ENCODE measurements at regions of chr5 and their contacts with region 1.

Region 1: GRCh38 chr5:43313035-43313853 is at the start of gene HMGCS1:
- DNase-seq: peak; percentile 99 to 100
- H3K4me3 ChIP-seq: peak within 1 kb of the TSS; percentile 85 to 94
- H3K27ac ChIP-seq: peak within 1 kb of the TSS; percentile 92 to 93
- H3K4me1 ChIP-seq: peaks cover 0 to 8% of the 10 kb centered on the region in 2 donors
- H3K27me3 ChIP-seq: no peaks in the 10 kb centered on the region
- CTCF ChIP-seq: no peak
- total RNA-seq, gene HMGCS1: 36.5 TPM

Region 2: DNA sequence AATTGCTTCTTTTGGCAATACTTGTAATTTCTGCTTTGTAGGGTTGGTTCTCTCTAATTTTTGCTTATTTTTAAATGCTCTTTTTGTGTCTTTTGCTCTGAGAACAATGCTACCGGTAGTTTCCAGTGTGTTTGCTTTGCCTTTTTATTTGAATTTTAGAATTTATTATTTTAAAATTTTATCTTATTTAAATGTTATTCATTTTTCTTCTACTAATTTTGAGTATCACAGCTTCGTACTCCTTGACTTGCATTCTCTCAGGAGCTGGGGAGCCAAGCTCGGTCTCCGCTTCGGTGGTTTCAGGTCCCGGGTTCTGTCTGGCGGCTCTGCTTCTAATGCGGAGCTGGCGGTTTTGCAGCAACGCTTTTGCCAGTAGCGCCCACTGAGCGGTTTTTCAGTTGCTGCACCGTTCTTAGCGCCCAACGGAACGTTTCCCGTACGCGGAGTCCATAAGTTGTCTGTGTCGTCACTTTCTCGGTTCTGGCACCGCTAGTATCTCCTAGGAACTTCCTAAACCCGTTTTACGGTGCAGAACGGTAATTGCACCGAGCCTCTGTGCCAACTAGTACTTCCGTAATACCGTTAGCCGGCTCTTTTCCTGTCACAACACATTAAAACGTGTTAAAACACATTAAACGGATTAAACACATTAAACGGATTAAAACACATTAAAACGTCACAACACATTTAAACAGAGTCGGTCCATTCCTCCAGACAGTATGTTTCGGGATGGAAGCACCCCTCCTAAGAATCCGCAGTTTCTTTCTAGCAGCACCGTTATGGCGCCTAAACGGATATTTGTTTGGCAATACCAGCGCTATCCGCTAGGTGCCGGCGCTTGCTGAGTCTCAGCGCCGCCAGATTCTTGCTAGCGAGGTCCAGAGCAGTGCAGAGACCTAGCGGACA is 318.7 kb before region 1 on chr5:
- intact Hi-C with region 1: loop called (anchors 1 kb)
- DNase-seq: peak in 1 of 2 donors; percentile 94
- H3K4me3 ChIP-seq: peak overlapping the region; percentile 52 to 72
- H3K27ac ChIP-seq: peak overlapping the region; percentile 90 to 97
- H3K4me1 ChIP-seq: peaks cover 0 to 4% of the 10 kb centered on the region in 2 donors
- H3K27me3 ChIP-seq: no peaks in the 10 kb centered on the region
- CTCF ChIP-seq: peak; percentile 84 to 88 (median 85)

Region 3: GRCh38 chr5:43191740-43192557 is 121.3 kb before region 1 on chr5 and contains the start of gene NIM1K:
- intact Hi-C with region 1: loop called (anchors 2 kb)
- DNase-seq: peak; percentile 11 to 77
- H3K4me3 ChIP-seq: peak within 1 kb of the TSS; percentile 49 to 87
- H3K27ac ChIP-seq: no peak within 1 kb of the TSS
- H3K4me1 ChIP-seq: peaks cover 0 to 5% of the 10 kb centered on the region in 2 donors
- H3K27me3 ChIP-seq: no peaks in the 10 kb centered on the region
- CTCF ChIP-seq: no peak
- total RNA-seq, gene NIM1K: not detected

Region 4: GRCh38 chr5:43484106-43484849 is 171.0 kb after region 1 on chr5:
- intact Hi-C with region 1: loop called (anchors 1 kb)
- DNase-seq: peak; percentile 14 to 85
- H3K4me3 ChIP-seq: peak overlapping the region; percentile 69 to 97
- H3K27ac ChIP-seq: peak overlapping the region; percentile 98 to 99
- H3K4me1 ChIP-seq: peaks cover 0 to 7% of the 10 kb centered on the region in 2 donors
- H3K27me3 ChIP-seq: no peaks in the 10 kb centered on the region
- CTCF ChIP-seq: peak; percentile 54 to 79 (median 67)

Region 5: DNA sequence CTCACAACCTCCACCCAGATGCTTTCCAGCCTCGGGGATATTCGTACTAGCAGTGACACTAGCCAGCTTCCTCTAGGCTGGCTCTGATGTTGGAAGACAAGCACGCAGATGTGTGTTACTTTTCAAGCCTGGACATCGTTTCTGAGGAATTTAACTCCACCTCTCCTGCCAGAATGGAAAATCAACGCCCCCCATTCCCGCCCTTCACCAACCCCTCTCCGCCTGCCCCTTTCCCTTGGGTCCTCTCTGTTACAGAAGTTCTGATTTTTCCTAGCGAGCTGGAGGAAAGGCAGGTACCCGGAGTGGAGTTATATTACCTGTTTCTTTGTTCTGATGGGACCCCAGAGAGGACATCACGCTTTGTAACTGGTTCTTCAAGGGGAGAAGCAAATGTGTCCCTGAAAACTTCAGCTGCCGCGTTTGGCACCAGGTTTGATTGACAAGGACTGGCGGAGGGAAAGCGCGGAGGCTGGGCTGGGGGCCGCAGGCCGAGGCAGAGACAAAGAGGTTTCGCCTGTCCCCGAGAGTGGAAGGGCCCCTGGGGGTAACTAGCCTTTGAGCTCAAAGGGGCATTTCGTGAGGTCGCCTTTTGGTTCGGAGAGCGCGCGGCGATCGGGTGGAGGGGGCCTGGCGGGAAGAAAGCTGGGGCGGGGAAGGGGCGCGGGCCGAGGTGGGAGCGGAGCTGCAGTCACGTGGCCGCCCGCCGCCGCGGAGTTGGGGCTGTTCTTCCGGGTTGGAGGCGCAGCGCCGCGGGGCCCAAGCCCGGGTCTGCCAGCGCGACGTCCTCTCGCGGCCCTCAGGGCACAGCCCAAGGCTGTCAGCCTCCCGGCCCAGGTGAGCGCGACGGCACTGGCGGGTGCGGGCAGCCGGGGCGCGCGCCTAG is 289.5 kb after region 1 on chr5 and contains the start of gene NNT:
- intact Hi-C with region 1: loop called (anchors 2 kb)
- DNase-seq: peak; percentile 12 to 87
- H3K4me3 ChIP-seq: peak within 1 kb of the TSS; percentile 82 to 97
- H3K27ac ChIP-seq: peak within 1 kb of the TSS; percentile 86 to 95
- H3K4me1 ChIP-seq: peaks cover 2 to 9% of the 10 kb centered on the region in 2 donors
- H3K27me3 ChIP-seq: no peaks in the 10 kb centered on the region
- CTCF ChIP-seq: no peak
- total RNA-seq, gene NNT: 13.3 TPM